Common myeloid progenitor, CD34-positive (primary cell): ENCODE measurements at regions of chr1 and their contacts with region 1.

Region 1: GRCh38 chr1:182143154-182143657 is 81.7 kb upstream of the ZNF648 start:
- DNase-seq: peak; percentile 80 to 89 (median 84)
- H3K4me3 ChIP-seq: no peak overlapping the region
- H3K27ac ChIP-seq: no peak overlapping the region
- H3K4me1 ChIP-seq: peaks cover 17 to 46% (median 19%) of the 10 kb centered on the region in 4 experiments
- H3K27me3 ChIP-seq: peaks cover 0 to 4% (median 0%) of the 10 kb centered on the region in 5 experiments

Region 2: DNA sequence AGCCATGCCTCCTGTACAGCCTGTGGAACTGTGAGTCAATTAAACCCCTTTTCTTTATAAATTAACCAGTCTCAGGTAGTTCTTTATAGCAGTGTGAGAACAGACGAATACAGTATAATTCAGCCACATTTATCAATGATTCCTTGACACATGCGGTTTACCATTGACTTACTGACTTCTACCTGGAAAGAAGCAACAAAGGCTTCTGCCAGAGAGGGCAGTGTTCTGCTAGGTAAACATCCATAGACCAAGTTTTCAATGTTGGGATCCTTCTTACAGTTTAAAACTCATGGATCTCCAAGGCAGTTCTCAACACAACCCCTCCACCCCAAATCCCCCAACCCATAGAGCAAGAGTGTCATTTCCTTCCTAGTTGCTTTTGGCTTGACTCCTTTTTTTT is 232.3 kb before region 1 on chr1:
- CTCF ChIA-PET with region 1: no interaction called
- POLR2A ChIA-PET with region 1: no interaction called
- DNase-seq: no peak
- H3K4me3 ChIP-seq: no peak overlapping the region
- H3K27ac ChIP-seq: no peak overlapping the region
- H3K4me1 ChIP-seq: no peaks in the 10 kb centered on the region
- H3K27me3 ChIP-seq: peaks cover 0 to 1% (median 0%) of the 10 kb centered on the region in 5 experiments

Region 3: DNA sequence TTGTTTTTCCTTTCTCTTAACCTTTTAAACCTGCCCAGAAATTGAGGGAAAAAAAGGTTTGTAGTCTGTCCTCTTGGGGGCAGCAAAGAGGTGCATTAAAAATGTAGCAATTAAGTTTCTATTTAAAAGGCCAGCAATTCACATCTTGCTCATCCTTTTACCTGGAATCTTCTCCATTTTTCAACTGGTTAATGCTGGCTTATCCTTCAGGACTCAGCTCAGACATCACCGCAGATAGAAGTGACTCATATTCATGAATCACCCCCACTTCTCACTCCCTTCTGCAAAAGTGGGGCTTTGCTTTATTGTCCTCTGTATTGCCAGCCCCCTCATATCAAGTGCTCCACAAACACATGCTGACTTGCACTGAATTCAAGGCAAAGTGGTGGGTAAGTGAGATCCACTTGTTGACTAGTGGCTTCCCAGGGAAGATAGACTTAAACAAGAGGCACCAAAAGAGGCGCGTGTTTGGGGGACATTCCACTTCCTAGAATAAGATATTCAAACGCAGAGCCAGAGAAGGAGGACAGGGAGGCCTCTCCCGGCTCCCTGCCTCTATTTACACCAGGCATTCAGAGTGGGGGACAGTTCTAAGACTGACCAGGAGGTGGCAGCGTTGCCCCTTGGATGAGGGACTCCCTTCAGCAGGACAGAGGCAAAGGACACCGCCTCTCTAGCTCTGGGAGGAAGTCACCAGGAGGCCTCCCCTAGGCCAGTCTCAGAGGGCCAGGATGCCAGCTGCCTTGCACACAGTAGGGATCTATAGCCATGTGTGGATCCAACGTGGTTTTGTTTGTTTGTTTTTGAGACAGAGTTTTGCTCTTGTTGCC is 58.5 kb before region 1 on chr1:
- CTCF ChIA-PET with region 1: interaction called, 29 read pairs
- POLR2A ChIA-PET with region 1: no interaction called
- DNase-seq: peak; percentile 78 to 89 (median 85)
- H3K4me3 ChIP-seq: peak overlapping the region in 3 of 7 experiments; percentile 29 to 49 (median 48)
- H3K27ac ChIP-seq: no peak overlapping the region
- H3K4me1 ChIP-seq: peaks cover 0 to 19% (median 16%) of the 10 kb centered on the region in 4 experiments
- H3K27me3 ChIP-seq: no peaks in the 10 kb centered on the region

Region 4: DNA sequence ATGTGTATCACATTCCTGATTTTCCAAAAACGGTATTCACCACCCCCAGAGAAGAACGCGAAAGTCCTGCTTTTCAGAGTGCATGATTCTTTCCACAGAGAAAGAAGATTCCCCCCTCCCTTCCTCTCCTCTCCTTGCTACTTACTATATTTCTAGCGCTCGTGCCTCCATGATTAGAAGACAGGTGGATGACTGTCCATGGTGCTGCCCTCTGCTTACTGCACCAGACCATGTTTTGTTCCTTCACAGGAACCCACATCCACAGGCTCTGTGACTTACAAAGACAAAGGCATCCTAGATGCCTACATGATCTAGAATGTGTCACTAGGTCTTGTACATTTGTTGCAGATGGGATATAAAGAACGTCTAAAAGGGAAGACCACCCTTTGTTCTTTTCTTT is 32.6 kb before region 1 on chr1:
- CTCF ChIA-PET with region 1: interaction called, 10 read pairs
- POLR2A ChIA-PET with region 1: no interaction called
- DNase-seq: no peak
- H3K4me3 ChIP-seq: no peak overlapping the region
- H3K27ac ChIP-seq: no peak overlapping the region
- H3K4me1 ChIP-seq: no peaks in the 10 kb centered on the region
- H3K27me3 ChIP-seq: peaks cover 2 to 17% (median 4%) of the 10 kb centered on the region in 5 experiments

Region 5: DNA sequence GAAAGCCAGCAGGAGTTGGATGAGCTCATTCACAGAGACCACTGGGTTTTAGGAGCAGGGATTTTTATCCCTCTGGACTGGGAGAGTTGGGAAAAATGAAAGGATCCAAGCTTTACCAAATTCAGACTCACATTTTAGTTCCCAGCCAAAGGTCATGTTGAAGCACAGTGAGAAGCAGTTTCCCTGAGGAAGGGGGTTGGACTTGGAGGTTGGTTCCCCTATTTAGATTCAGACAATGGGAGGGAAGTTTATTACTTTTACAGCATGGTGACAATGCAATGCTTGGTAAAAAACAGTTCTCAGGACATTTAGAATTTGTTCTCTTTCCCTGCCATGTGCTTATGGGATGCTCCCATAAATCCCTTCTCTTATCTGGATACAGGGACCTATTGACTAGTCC is 24.4 kb before region 1 on chr1:
- CTCF ChIA-PET with region 1: interaction called, 11 read pairs
- POLR2A ChIA-PET with region 1: no interaction called
- DNase-seq: no peak
- H3K4me3 ChIP-seq: no peak overlapping the region
- H3K27ac ChIP-seq: no peak overlapping the region
- H3K4me1 ChIP-seq: no peaks in the 10 kb centered on the region
- H3K27me3 ChIP-seq: peaks cover 0 to 10% (median 3%) of the 10 kb centered on the region in 5 experiments

Region 6: DNA sequence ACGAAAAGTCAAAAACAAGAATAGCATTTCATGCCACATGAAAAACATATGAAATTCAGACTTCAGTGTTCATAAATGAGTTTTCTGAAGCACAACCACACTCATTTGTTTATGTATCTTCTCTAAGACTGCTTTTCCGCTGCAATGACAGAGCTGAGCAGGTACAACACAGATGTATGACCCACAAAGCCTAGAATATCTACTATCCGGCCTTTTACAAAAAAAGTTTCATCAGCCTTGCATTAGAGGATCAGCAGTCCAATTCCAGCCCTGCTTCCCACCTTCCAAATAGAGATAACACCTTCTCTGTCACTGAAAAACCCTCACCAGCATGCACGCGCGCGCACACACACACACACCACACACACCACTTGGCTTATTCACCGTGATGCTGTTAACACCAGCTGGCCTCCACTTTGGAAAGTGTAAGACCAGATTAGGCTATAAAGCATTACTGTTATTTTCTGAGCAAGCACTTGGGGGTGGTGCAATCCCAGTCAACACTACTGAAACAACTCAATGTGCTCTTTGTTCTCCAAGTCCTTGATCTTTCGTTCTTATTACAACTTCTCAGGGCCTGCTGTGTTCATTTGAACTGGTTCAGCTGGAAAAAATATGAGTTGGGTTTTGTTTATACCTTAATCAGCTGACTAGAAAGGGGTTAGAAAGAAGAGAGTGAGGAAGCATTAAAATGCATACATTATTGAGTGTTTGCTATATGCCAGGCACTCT is 158.4 kb after region 1 on chr1:
- CTCF ChIA-PET with region 1: interaction called, 32 read pairs
- POLR2A ChIA-PET with region 1: no interaction called
- DNase-seq: peak; percentile 25 to 67 (median 59)
- H3K4me3 ChIP-seq: no peak overlapping the region
- H3K27ac ChIP-seq: peak overlapping the region in 1 of 2 experiments; percentile 81
- H3K4me1 ChIP-seq: peaks cover 0 to 51% (median 34%) of the 10 kb centered on the region in 4 experiments
- H3K27me3 ChIP-seq: no peaks in the 10 kb centered on the region

Region 7: GRCh38 chr1:182381962-182382819 is 239.0 kb after region 1 on chr1:
- CTCF ChIA-PET with region 1: interaction called, 11 read pairs
- POLR2A ChIA-PET with region 1: no interaction called
- DNase-seq: no peak
- H3K4me3 ChIP-seq: no peak overlapping the region
- H3K27ac ChIP-seq: no peak overlapping the region
- H3K4me1 ChIP-seq: peaks cover 0 to 6% (median 0%) of the 10 kb centered on the region in 4 experiments
- H3K27me3 ChIP-seq: no peaks in the 10 kb centered on the region

Region 8: GRCh38 chr1:182391362-182392044 is 248.3 kb after region 1 on chr1 and contains the start of gene GLUL:
- CTCF ChIA-PET with region 1: interaction called, 236 read pairs
- POLR2A ChIA-PET with region 1: interaction called, 6 read pairs
- DNase-seq: peak; percentile 89 to 95 (median 94)
- H3K4me3 ChIP-seq: peak within 1 kb of the TSS; percentile 71 to 91 (median 83)
- H3K27ac ChIP-seq: peak within 1 kb of the TSS; percentile 68 to 91
- H3K4me1 ChIP-seq: peaks cover 18 to 69% (median 28%) of the 10 kb centered on the region in 4 experiments
- H3K27me3 ChIP-seq: no peaks in the 10 kb centered on the region